HepG2 (cell line): ENCODE measurements at regions of chr4 and their contacts with region 1.

Region 1: GRCh38 chr4:102500696-102501446 is at the start of gene NFKB1:
- DNase-seq: peak; percentile 54
- ATAC-seq: peak; percentile 61
- H3K4me3 ChIP-seq: peak within 1 kb of the TSS; percentile 85 to 94 (median 92)
- H3K27ac ChIP-seq: peak within 1 kb of the TSS; percentile 97
- H3K4me1 ChIP-seq: peaks cover 43% of the 10 kb centered on the region
- H3K27me3 ChIP-seq: no peaks in the 10 kb centered on the region
- CTCF ChIP-seq: no peak
- EP300 ChIP-seq: no peak
- POLR2A ChIP-seq: peak in 1 of 2 experiments; percentile 11; a peak in 2 of 4 replicates
- RAD21 ChIP-seq: no peak
- total RNA-seq, gene NFKB1: 31.6 and 37.6 TPM in 2 replicates

Region 2: DNA sequence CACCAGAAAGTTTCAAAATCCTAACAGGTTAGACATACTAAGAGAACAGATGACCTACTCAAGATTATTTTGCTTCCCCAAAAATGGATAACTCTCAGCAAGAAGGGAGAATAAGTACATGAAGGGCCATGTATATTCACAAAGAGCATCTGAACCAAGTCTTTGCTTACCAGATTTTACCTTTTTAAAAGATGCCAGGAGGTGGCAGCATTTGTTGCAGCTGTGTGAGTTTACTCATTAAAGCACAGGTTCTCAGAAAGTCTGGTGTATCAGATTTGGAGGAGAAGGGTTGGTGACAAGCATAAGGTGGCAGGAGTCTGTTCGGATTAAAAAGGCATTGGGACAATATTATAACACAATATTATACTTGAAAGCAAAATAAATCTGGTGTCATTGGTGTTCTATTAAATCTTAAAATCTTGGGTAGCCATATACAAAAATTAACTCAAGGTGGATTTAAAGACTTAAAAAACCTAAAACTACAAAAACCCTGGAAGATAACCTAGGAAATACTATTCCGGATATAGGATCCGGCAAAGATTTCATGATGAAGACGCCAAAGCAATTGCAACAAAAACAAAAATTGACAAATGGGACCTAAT is 51.0 kb before region 1 on chr4:
- CTCF ChIA-PET with region 1: interaction called, 3 read pairs
- POLR2A ChIA-PET with region 1: no interaction called
- in situ Hi-C with region 1: no loop called
- intact Hi-C with region 1: loop called (anchors 2 kb)
- DNase-seq: peak; percentile 65
- ATAC-seq: peak; percentile 81
- H3K4me3 ChIP-seq: no peak overlapping the region
- H3K27ac ChIP-seq: no peak overlapping the region
- H3K4me1 ChIP-seq: peaks cover 3% of the 10 kb centered on the region
- H3K27me3 ChIP-seq: no peaks in the 10 kb centered on the region; a peak in 1 of 5 replicates
- CTCF ChIP-seq: peak; percentile 82
- EP300 ChIP-seq: no peak
- POLR2A ChIP-seq: no peak
- RAD21 ChIP-seq: peak; percentile 64

Region 3: GRCh38 chr4:102477657-102478056 is 23.2 kb before region 1 on chr4:
- CTCF ChIA-PET with region 1: no interaction called
- POLR2A ChIA-PET with region 1: interaction called, 23 read pairs
- in situ Hi-C with region 1: no loop called
- intact Hi-C with region 1: no loop called
- DNase-seq: no peak
- ATAC-seq: no peak
- H3K4me3 ChIP-seq: peak overlapping the region in 1 of 3 experiments; percentile 59; a peak in 2 of 6 replicates
- H3K27ac ChIP-seq: no peak overlapping the region
- H3K4me1 ChIP-seq: peaks cover 29% of the 10 kb centered on the region
- H3K27me3 ChIP-seq: no peaks in the 10 kb centered on the region
- CTCF ChIP-seq: no peak
- EP300 ChIP-seq: no peak
- POLR2A ChIP-seq: no peak
- RAD21 ChIP-seq: no peak

Region 4: GRCh38 chr4:102578819-102579218 is 77.9 kb after region 1 on chr4:
- CTCF ChIA-PET with region 1: no interaction called
- POLR2A ChIA-PET with region 1: interaction called, 5 read pairs
- in situ Hi-C with region 1: no loop called
- intact Hi-C with region 1: loop called (anchors 5 kb)
- DNase-seq: no peak
- ATAC-seq: no peak
- H3K4me3 ChIP-seq: no peak overlapping the region
- H3K27ac ChIP-seq: no peak overlapping the region
- H3K4me1 ChIP-seq: peaks cover 30% of the 10 kb centered on the region
- H3K27me3 ChIP-seq: no peaks in the 10 kb centered on the region
- CTCF ChIP-seq: no peak
- EP300 ChIP-seq: no peak
- POLR2A ChIP-seq: no peak
- RAD21 ChIP-seq: no peak

Region 5: DNA sequence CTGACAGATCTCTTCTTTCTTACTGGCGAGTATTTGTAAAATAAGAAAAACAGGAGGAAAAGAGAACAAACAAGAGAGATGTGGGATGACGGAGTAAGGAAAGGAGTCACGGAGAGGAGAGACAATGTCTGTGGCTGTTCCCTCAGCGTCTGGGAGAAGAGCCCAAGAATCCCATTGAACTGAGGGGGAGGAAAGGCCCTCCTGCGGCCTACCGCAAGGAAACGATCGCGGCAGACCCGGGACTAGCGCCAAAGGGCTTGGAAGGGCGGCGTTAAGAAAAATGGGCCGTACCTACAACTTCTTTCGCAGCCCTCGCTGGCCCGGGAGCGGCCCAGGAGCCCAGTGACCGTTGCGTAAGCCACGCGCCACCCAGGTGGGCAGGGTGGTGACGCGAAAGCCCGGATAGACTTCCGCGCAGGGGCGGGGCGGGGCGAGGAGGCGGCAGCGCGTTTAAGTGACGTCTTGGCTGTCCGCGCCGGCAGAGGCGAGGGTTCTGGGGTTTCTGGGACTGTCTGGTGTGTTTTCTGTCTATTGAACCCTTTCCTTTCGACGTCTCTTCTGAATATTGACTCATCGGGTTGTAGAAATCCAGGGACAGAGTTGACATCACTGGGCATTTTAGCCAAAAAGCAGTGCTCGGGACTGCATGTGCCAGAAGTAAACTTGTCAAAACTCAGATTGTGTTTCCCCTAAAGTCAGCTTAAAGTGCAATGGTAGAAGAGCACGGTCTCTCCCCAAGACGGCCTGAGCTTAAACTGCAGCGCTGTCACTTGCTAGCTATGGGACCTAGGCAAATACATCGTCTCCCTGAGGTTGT is 518.6 kb after region 1 on chr4 and contains the start of gene SLC9B1:
- CTCF ChIA-PET with region 1: no interaction called
- POLR2A ChIA-PET with region 1: no interaction called
- in situ Hi-C with region 1: no loop called
- intact Hi-C with region 1: loop called (anchors 5 kb)
- DNase-seq: peak; percentile 77
- ATAC-seq: peak; percentile 96
- H3K4me3 ChIP-seq: peak within 1 kb of the TSS; percentile 68 to 81 (median 76)
- H3K27ac ChIP-seq: peak within 1 kb of the TSS; percentile 79
- H3K4me1 ChIP-seq: peaks cover 11% of the 10 kb centered on the region
- H3K27me3 ChIP-seq: no peaks in the 10 kb centered on the region; a peak in 1 of 5 replicates
- CTCF ChIP-seq: peak; percentile 24; the same call in 1 of the 2 replicates
- EP300 ChIP-seq: peak in 1 of 2 experiments; percentile 55; a peak in 2 of 4 replicates
- POLR2A ChIP-seq: peak; percentile 75 to 76
- RAD21 ChIP-seq: peak; percentile 13; the same call in 1 of the 2 replicates
- total RNA-seq, gene SLC9B1: 0.20 TPM in 1 of 2 replicates, not detected in the other